ENCODE measurements at regions of chr3 and their contacts with region 1.

Region 1: DNA sequence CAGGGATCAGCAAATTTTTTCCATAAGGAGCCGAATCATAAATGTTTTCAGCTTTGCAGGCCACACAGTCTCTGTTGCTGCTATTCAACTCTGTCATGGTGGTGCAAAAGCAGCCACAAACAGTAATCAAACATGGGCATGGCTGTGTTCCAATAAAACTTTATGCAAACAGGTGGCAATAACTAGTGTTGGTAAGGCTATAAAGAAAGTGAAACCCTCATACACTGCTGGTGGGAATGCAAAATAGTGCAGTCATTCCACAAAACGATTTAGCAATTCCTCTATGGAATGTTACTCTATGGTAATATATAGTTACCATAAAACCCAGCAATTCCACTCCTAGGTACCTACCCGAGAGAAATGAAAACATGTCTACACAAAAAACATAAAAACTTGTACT is 14.0 kb upstream of the MRPS25 start:
- DNase-seq: no peak
- H3K4me3 ChIP-seq: no peak overlapping the region
- H3K27ac ChIP-seq: no peak overlapping the region
- H3K4me1 ChIP-seq: no peaks in the 10 kb centered on the region
- H3K27me3 ChIP-seq: no peaks in the 10 kb centered on the region
- CTCF ChIP-seq: no peak

Region 2: DNA sequence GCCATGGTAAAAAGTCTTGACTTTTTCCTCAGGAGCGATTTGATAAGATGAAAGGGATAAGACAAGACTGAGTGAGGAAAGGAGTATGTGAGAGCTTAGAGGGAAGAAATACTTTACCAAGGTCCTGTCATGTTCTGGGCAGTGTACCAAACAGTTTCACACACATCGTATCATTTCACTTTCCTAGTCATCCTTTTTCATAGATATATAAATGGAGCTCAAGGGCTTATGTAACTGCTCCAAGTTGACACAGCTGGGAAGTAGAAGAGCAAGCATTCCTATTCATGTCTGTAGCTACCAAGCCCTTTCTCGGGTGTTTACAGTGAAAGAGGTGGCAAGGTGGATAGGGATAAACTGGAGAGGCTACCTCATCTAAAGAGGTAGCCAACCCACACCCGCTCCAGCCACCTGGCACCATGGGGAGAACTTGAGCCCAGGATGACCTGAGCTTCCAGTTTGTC is 71.4 kb before region 1 on chr3:
- CTCF ChIA-PET with region 1: no interaction called
- dilution Hi-C with region 1: loop called (anchors 5 kb)
- in situ Hi-C with region 1: no loop called
- intact Hi-C with region 1: no loop called
- DNase-seq: peak; percentile 9
- H3K4me3 ChIP-seq: no peak overlapping the region
- H3K27ac ChIP-seq: no peak overlapping the region
- H3K4me1 ChIP-seq: peaks cover 16% of the 10 kb centered on the region
- H3K27me3 ChIP-seq: no peaks in the 10 kb centered on the region
- CTCF ChIP-seq: no peak